Brain microvascular endothelial cell (primary cell): ENCODE measurements at regions of chr17 and their contacts with region 1.

Region 1: GRCh38 chr17:41801374-41802271 is 10.1 kb downstream of the P3H4 start:
- DNase-seq: peak; percentile 64
- H3K4me3 ChIP-seq: no peak overlapping the region
- H3K27ac ChIP-seq: no peak overlapping the region
- H3K27me3 ChIP-seq: no peaks in the 10 kb centered on the region
- CTCF ChIP-seq: peak; percentile 99

Region 2: DNA sequence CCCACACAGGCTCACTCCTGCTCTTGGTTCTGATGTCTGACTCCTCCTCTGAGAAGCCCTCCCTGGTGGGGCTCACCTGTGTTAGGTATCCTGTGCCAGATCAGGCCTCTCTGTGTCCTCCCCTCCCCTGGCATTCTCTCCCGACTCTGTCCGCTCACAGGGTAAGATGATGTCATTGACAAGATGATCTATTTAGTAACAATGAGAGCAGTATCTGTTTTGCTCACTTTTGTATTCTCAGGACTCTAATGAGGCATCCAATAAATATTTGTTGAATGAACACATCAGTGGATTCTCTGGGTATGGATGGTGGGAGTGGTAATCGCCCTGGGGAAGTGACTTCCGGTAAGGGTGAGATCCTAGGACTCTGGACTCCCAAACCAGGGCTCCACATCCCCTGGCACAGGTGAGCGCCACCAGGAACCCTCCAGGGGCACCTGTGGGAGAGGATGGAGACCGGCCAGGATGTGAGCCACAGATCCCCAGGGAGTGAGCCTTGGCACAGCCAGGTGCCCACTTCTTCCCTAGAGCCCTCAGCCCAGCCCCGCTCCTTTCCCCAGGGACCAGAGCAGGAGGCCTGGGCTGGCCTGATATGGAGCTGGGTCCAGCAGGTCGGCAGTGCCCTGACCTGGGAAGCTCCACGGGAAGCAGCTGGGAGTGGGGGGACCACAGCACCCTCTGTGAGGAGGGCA is 61.8 kb before region 1 on chr17:
- in situ Hi-C with region 1: loop called (anchors 10 kb)
- DNase-seq: no peak
- H3K4me3 ChIP-seq: no peak overlapping the region
- H3K27ac ChIP-seq: no peak overlapping the region
- H3K27me3 ChIP-seq: peaks cover 19% of the 10 kb centered on the region
- CTCF ChIP-seq: no peak

Region 3: GRCh38 chr17:41930009-41930832 is 128.6 kb after region 1 on chr17 and contains the start of gene ODAD4:
- in situ Hi-C with region 1: no loop called
- DNase-seq: peak; percentile 98
- H3K4me3 ChIP-seq: peak within 1 kb of the TSS; percentile 65
- H3K27ac ChIP-seq: peak within 1 kb of the TSS; percentile 62
- H3K27me3 ChIP-seq: no peaks in the 10 kb centered on the region
- CTCF ChIP-seq: peak; percentile 75

Region 4: GRCh38 chr17:41966463-41967140 is 165.0 kb after region 1 on chr17 and contains the start of gene CNP:
- in situ Hi-C with region 1: no loop called
- DNase-seq: peak; percentile 82
- H3K4me3 ChIP-seq: peak within 1 kb of the TSS; percentile 81
- H3K27ac ChIP-seq: peak within 1 kb of the TSS; percentile 52
- H3K27me3 ChIP-seq: no peaks in the 10 kb centered on the region
- CTCF ChIP-seq: no peak